ENCODE measurements at regions of chr2 and their contacts with region 1.

Region 1: DNA sequence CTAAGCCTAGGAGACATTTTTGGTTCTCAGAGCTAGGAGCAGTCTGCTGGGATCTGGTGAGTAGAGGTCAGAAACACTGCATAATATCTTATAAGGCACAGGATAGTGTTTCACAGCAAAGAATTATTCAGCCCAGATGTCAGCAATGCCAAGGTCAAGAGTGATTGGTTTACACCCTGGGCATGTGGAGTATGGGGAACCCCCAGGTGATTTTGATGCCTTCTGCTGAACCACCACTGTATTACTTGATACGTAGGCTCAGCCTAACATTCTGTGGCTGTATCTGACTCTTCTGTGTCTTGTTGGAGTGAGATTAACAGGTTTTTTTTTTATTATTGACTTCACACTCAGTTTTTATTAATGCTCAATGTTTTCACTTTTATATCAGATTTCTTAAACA is 6.0 kb downstream of the DDX18 start:
- DNase-seq: no peak
- ATAC-seq: no peak
- H3K4me3 ChIP-seq: no peak overlapping the region
- H3K27ac ChIP-seq: no peak overlapping the region
- H3K4me1 ChIP-seq: peaks cover 15% of the 10 kb centered on the region
- H3K27me3 ChIP-seq: no peaks in the 10 kb centered on the region
- CTCF ChIP-seq: no peak

Region 2: DNA sequence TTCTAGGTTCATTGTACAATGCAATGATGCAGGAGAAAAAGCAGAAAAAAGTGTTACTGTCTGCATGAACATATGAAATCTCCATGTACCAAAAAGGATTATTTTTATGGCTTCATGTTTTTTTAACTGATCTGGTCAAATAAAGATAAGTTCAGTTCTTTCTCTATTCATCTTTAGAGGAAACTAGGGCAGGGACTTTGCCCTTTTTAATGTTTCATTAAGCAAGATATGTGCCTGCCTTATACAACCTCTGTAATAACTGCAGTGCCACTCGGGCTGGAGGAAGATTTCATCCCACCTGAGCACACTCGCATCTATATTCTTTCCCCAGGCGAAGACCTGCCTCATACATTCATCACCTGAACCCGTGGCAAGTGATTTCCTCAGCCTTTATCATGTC is 163.9 kb before region 1 on chr2:
- CTCF ChIA-PET with region 1: no interaction called
- POLR2A ChIA-PET with region 1: no interaction called
- in situ Hi-C with region 1: no loop called
- intact Hi-C with region 1: no loop called
- DNase-seq: no peak
- ATAC-seq: no peak
- H3K4me3 ChIP-seq: no peak overlapping the region
- H3K27ac ChIP-seq: no peak overlapping the region
- H3K4me1 ChIP-seq: no peaks in the 10 kb centered on the region
- H3K27me3 ChIP-seq: no peaks in the 10 kb centered on the region
- CTCF ChIP-seq: no peak

Region 3: DNA sequence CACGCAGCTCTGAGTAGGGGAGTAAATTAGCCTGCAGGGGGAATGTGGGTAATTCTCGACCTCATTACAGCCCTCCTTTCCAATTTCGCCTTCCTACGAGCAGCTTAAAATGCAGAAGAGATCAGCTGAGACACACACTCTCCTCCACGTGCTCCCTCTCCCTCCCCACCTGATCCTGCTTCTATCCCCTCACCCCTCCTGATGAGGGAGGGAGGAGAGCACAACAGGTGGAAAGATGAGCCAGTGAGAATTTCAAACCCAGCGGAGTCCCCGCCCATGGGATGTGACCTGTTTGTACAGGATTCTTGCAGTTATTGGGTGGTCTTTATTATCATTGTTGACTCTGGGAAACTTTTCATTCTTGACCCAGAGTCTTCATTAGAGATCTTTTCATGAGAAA is 29.6 kb after region 1 on chr2:
- CTCF ChIA-PET with region 1: no interaction called
- POLR2A ChIA-PET with region 1: no interaction called
- in situ Hi-C with region 1: no loop called
- intact Hi-C with region 1: no loop called
- DNase-seq: no peak
- ATAC-seq: no peak
- H3K4me3 ChIP-seq: no peak overlapping the region
- H3K27ac ChIP-seq: no peak overlapping the region
- H3K4me1 ChIP-seq: no peaks in the 10 kb centered on the region
- H3K27me3 ChIP-seq: no peaks in the 10 kb centered on the region
- CTCF ChIP-seq: no peak

Region 4: DNA sequence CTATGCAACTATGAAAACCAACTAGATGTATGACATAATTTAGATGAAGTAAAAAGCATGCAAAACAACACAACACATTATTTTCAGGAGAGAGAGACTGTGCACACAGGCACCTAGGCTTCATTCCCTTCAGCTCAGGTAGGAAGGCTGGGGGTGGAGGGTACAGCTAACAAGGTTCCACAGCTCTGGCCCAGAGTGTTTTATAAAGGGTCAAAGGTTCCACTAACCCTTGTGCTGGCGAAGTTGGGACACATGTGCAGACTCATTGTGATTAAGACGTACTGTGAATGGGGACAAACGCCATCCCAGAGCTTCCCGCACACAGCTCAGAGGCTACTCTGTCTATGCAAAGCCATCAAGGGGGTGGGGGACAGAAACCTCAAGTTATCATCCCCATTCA is 174.3 kb after region 1 on chr2:
- CTCF ChIA-PET with region 1: no interaction called
- POLR2A ChIA-PET with region 1: no interaction called
- in situ Hi-C with region 1: no loop called
- intact Hi-C with region 1: loop called (anchors 5 kb)
- DNase-seq: no peak
- ATAC-seq: no peak
- H3K4me3 ChIP-seq: no peak overlapping the region
- H3K27ac ChIP-seq: no peak overlapping the region
- H3K4me1 ChIP-seq: no peaks in the 10 kb centered on the region
- H3K27me3 ChIP-seq: no peaks in the 10 kb centered on the region
- CTCF ChIP-seq: no peak

Region 5: GRCh38 chr2:118242216-118242615 is 421.8 kb after region 1 on chr2:
- CTCF ChIA-PET with region 1: no interaction called
- POLR2A ChIA-PET with region 1: no interaction called
- in situ Hi-C with region 1: no loop called
- intact Hi-C with region 1: no loop called
- DNase-seq: no peak
- ATAC-seq: no peak
- H3K4me3 ChIP-seq: no peak overlapping the region
- H3K27ac ChIP-seq: no peak overlapping the region
- H3K4me1 ChIP-seq: no peaks in the 10 kb centered on the region
- H3K27me3 ChIP-seq: no peaks in the 10 kb centered on the region
- CTCF ChIP-seq: no peak